T-cell (primary cell): ENCODE measurements at regions of chr13 and their contacts with region 1.

Region 1: GRCh38 chr13:79679334-79679733 is 198.4 kb downstream of the NDFIP2 start:
- DNase-seq: peak in 11 of 35 experiments; percentile 1 to 39 (median 5)
- ATAC-seq: no peak
- H3K4me3 ChIP-seq: no peak overlapping the region
- H3K4me3 Mint-ChIP-seq: no peak overlapping the region
- H3K27ac ChIP-seq: no peak overlapping the region
- H3K27ac Mint-ChIP-seq: no peak overlapping the region
- H3K4me1 ChIP-seq: no peaks in the 10 kb centered on the region
- H3K4me1 Mint-ChIP-seq: peaks cover 0 to 5% (median 0%) of the 10 kb centered on the region in 3 donors
- H3K27me3 ChIP-seq: no peaks in the 10 kb centered on the region
- H3K27me3 Mint-ChIP-seq: peaks cover 0 to 3% of the 10 kb centered on the region in 2 donors

Region 2: GRCh38 chr13:79571147-79571546 is 108.2 kb before region 1 on chr13:
- CTCF ChIA-PET with region 1: no interaction called
- POLR2A ChIA-PET with region 1: no interaction called
- DNase-seq: no peak
- ATAC-seq: no peak
- H3K4me3 ChIP-seq: no peak overlapping the region
- H3K4me3 Mint-ChIP-seq: no peak overlapping the region
- H3K27ac ChIP-seq: no peak overlapping the region
- H3K27ac Mint-ChIP-seq: no peak overlapping the region
- H3K4me1 ChIP-seq: no peaks in the 10 kb centered on the region
- H3K4me1 Mint-ChIP-seq: no peaks in the 10 kb centered on the region
- H3K27me3 ChIP-seq: no peaks in the 10 kb centered on the region
- H3K27me3 Mint-ChIP-seq: peaks cover 0 to 5% of the 10 kb centered on the region in 2 donors

Region 3: GRCh38 chr13:81017513-81018152 is 1338.3 kb after region 1 on chr13:
- CTCF ChIA-PET with region 1: interaction called in 1 of 2 experiments, 18 read pairs
- POLR2A ChIA-PET with region 1: no interaction called
- DNase-seq: peak in 1 of 35 experiments; percentile 26
- ATAC-seq: no peak
- H3K4me3 ChIP-seq: no peak overlapping the region
- H3K4me3 Mint-ChIP-seq: no peak overlapping the region
- H3K27ac ChIP-seq: no peak overlapping the region
- H3K27ac Mint-ChIP-seq: no peak overlapping the region
- H3K4me1 ChIP-seq: no peaks in the 10 kb centered on the region
- H3K4me1 Mint-ChIP-seq: no peaks in the 10 kb centered on the region
- H3K27me3 ChIP-seq: no peaks in the 10 kb centered on the region
- H3K27me3 Mint-ChIP-seq: no peaks in the 10 kb centered on the region